Sigmoid colon (tissue), 7 donors: ENCODE measurements at regions of chr11 and their contacts with region 1.

Region 1: DNA sequence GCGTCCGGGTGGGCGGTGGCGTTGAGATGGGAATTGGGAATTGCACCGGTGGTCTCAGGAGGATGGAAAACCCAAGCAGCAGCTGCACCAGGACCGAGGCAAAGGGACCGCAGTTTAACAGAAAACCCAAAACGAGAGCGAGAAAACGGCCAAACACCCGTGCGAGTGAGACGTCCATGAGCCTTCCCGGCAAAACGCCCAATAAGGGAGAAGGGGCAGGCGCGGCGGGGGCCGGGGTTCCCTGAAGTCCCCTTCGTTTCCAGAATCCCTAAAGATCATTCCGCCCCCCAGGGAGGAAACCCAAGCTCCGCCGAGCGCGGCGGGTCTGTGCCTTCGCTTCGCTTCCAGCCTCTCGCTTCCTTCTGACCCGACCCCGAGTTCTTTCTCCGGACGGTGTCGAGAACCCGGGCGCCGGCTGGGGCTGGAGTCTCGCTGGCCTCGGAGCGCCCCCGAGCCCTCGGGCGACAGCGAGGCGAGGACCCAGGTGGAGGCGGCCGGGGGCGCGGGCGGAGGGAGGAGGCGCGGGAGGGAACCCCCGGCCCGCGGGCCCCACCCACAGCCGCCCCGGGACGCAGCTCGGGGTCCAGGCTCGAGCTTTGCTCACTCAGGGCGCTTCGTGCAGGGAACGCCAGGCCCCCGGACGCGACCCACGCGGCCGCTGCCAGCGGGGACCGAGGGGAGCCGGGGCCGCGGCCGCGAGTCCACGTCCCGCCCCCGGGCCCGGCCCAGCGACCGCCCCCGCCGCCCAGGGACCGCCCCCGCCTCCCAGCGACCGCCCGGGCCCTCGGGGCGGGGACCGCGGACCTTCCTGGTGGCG is at the start of gene PGGHG:
- DNase-seq: peak; percentile 87
- H3K4me3 ChIP-seq: peak within 1 kb of the TSS; percentile 46 to 77 (median 68)
- H3K27ac ChIP-seq: peak within 1 kb of the TSS; percentile 50 to 70 (median 66)
- H3K4me1 ChIP-seq: peaks cover 0 to 21% (median 17%) of the 10 kb centered on the region in 4 donors
- H3K27me3 ChIP-seq: peaks cover 6 to 42% (median 20%) of the 10 kb centered on the region in 3 donors
- CTCF ChIP-seq: no peak
- EP300 ChIP-seq: no peak
- POLR2A ChIP-seq: no peak
- total RNA-seq, gene PGGHG: 11.4 to 15.3 (median 13.6) TPM

Region 2: GRCh38 chr11:236774-237767 is 51.5 kb before region 1 on chr11 and contains the start of gene PSMD13:
- intact Hi-C with region 1: loop called (anchors 2 kb)
- DNase-seq: peak; percentile 90
- H3K4me3 ChIP-seq: peak within 1 kb of the TSS; percentile 83 to 96 (median 87)
- H3K27ac ChIP-seq: peak within 1 kb of the TSS; percentile 94 to 99 (median 95)
- H3K4me1 ChIP-seq: peaks cover 0 to 30% (median 25%) of the 10 kb centered on the region in 4 donors
- H3K27me3 ChIP-seq: no peaks in the 10 kb centered on the region
- CTCF ChIP-seq: peak in 1 of 4 experiments; percentile 8
- EP300 ChIP-seq: no peak
- POLR2A ChIP-seq: peak; percentile 6 to 32
- total RNA-seq, gene PSMD13: 86.2 to 118 (median 99.3) TPM

Region 3: DNA sequence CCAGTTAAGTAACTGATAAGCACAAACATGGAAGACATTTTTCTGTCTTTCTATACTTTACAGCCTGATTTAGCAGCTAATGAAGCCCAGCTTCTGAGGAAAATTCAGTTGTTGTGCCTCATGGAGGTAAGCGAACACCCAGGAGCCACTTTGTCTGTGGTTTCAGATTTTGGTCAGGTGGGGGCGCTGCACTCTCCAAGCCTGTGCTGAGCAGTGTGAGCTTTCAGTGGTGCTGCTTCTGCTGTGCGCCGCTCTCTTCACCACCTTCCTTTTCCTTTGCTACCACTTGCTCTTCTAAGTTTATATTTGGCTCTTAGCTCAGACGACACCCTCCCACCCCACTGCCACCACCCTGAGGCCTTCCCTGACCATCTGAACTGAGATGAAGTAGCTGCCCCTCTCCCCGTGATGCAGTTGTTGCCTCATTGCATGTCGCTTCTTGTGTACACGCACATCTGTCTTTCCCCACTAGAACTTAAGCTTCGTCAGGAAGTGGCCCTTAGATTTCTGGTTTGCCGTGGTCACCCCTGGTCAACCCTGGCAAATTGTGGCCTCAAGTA is 37.7 kb before region 1 on chr11:
- intact Hi-C with region 1: loop called (anchors 5 kb)
- DNase-seq: peak; percentile 72
- H3K4me3 ChIP-seq: no peak overlapping the region
- H3K27ac ChIP-seq: no peak overlapping the region
- H3K4me1 ChIP-seq: no peaks in the 10 kb centered on the region
- H3K27me3 ChIP-seq: no peaks in the 10 kb centered on the region
- CTCF ChIP-seq: peak; percentile 29 to 58 (median 46)
- EP300 ChIP-seq: no peak
- POLR2A ChIP-seq: no peak

Region 4: GRCh38 chr11:363948-364761 is 75.6 kb after region 1 on chr11:
- intact Hi-C with region 1: loop called (anchors 5 kb)
- DNase-seq: peak; percentile 57
- H3K4me3 ChIP-seq: no peak overlapping the region
- H3K27ac ChIP-seq: no peak overlapping the region
- H3K4me1 ChIP-seq: peaks cover 0 to 11% (median 9%) of the 10 kb centered on the region in 4 donors
- H3K27me3 ChIP-seq: peaks cover 21 to 46% (median 25%) of the 10 kb centered on the region in 3 donors
- CTCF ChIP-seq: no peak
- EP300 ChIP-seq: no peak
- POLR2A ChIP-seq: no peak

Region 5: DNA sequence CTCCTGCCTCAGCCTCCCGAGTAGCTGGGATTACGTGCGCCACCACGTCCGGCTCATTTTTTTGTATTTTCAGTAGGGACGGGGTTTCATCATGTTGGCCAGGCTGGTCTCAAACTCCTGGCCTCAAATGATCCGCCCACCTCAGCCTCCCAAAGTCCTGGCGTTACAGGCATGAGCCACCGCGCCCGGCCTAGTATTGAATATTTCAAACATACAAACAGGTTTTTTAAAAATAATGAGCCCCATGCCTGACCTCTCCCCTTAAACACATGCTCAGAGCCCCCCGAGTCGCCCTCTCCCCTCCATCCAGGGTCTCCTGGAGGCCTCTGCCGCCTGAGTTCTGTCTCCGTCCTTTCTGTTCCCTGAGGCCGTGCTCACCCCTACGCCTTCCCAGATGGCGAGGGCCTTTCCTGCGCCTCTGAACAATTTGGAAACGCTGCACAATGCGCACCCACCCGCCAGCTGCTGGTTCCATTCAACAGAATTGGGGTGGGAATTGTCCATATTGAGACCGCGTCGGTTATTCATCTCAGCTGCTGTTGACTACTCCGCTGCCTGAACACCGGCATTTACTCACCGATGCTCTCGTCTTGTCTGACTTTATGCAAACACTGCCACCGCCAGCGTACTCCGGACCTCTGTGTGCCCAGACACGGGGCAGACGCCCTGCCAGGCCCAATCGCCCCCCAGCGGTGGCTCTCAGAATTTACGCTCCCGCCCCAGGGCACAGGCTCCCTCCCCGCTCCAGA is 232.1 kb after region 1 on chr11:
- intact Hi-C with region 1: no loop called
- DNase-seq: no peak
- H3K4me3 ChIP-seq: no peak overlapping the region
- H3K27ac ChIP-seq: no peak overlapping the region
- H3K4me1 ChIP-seq: peaks cover 0 to 9% (median 4%) of the 10 kb centered on the region in 4 donors
- H3K27me3 ChIP-seq: no peaks in the 10 kb centered on the region
- CTCF ChIP-seq: no peak
- EP300 ChIP-seq: no peak
- POLR2A ChIP-seq: no peak